Ascending aorta (tissue), 2 donors: ENCODE measurements at regions of chr18 and their contacts with region 1.

Region 1: GRCh38 chr18:7566567-7567473 is at the start of gene PTPRM:
- DNase-seq: peak; percentile 64 to 95
- H3K4me3 ChIP-seq: peak within 1 kb of the TSS; percentile 85 to 96
- H3K27ac ChIP-seq: peak within 1 kb of the TSS; percentile 93 to 100
- H3K4me1 ChIP-seq: peaks cover 0 to 22% of the 10 kb centered on the region in 2 donors
- H3K27me3 ChIP-seq: no peaks in the 10 kb centered on the region
- CTCF ChIP-seq: peak in 1 of 3 experiments; percentile 86
- total RNA-seq, gene PTPRM: 257 TPM

Region 2: GRCh38 chr18:7084080-7085075 is 482.4 kb before region 1 on chr18:
- intact Hi-C with region 1: loop called (anchors 5 kb)
- DNase-seq: no peak
- H3K4me3 ChIP-seq: no peak overlapping the region
- H3K27ac ChIP-seq: peak overlapping the region; percentile 46 to 69
- H3K4me1 ChIP-seq: peaks cover 0 to 12% of the 10 kb centered on the region in 2 donors
- H3K27me3 ChIP-seq: no peaks in the 10 kb centered on the region
- CTCF ChIP-seq: no peak

Region 3: DNA sequence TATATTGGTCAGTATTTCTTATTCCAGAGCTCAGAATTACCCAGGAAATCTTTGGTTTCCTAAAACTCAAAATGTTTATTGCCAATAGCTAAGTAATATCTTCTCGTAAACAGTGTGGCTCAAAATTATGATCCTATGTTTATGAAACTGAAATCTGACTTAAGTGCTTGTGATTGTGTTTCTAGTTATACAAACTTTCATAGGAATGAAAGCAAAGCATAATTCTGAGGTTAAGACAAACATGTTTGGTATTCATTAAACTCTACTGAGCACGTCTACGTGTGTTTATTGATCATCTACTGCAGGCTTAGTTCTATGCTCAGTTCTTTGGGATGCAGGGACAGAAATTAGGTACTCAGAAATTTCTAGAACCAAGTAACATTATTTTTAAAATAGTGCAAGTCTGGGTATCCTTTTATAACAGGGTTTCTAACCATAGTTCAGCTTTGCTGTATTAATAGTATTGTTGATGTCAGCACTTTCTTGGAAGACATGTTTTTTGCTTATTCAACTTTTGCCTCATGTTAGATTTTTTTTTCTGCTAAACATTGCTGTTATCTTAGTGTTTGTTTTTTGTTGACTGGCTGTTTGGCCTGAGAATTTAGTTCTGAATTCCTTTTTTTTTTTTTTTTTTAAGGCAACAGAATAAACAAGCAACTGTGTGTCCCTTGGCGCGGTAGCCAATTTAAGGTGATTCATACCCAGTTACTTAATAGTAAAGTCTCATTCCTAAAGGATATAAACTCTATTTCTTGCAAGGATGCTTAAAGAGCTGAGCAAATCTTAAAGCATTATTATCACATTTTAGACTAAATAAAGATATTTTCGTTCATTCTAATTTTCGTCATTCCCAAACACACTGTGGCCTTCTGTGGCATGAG is 31.6 kb after region 1 on chr18:
- intact Hi-C with region 1: loop called (anchors 2 kb)
- DNase-seq: no peak
- H3K4me3 ChIP-seq: no peak overlapping the region
- H3K27ac ChIP-seq: peak overlapping the region in 1 of 2 donors; percentile 43
- H3K4me1 ChIP-seq: peaks cover 0 to 8% of the 10 kb centered on the region in 2 donors
- H3K27me3 ChIP-seq: no peaks in the 10 kb centered on the region
- CTCF ChIP-seq: no peak

Region 4: DNA sequence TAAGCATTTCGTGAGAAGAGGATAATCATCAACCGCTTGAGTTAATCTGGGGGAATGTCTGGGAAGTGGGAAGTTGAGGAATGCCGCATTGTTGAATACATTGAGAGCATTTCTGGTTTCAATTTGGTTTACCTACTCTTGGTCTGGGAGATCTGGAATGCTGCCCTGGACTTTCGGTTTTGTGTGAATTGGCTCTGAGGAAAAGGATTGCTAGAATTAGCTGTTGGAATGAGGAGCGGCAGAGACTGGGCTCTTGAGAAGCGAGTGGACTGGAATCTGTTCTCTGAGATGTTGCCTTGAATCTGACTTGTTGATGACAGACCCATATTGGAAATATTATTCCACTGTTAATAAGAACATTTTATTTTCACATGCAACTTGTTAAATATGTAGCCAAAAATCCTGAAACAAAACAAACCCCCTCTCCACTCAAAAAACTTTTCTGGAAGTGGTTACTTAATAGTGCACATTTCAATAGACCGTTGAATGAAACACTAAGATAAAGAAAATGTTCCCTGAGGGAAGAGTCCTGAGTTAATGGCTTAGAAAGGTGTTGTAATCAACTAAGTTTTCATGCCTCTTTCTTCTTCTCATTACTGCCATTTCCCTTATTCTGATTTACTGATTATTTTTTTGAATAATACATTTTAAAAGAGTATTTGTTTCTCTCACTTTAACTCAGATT is 51.1 kb after region 1 on chr18:
- intact Hi-C with region 1: loop called (anchors 2 kb)
- DNase-seq: no peak
- H3K4me3 ChIP-seq: peak overlapping the region in 1 of 2 donors; percentile 45
- H3K27ac ChIP-seq: peak overlapping the region; percentile 62 to 63
- H3K4me1 ChIP-seq: peaks cover 0 to 13% of the 10 kb centered on the region in 2 donors
- H3K27me3 ChIP-seq: no peaks in the 10 kb centered on the region
- CTCF ChIP-seq: no peak

Region 5: DNA sequence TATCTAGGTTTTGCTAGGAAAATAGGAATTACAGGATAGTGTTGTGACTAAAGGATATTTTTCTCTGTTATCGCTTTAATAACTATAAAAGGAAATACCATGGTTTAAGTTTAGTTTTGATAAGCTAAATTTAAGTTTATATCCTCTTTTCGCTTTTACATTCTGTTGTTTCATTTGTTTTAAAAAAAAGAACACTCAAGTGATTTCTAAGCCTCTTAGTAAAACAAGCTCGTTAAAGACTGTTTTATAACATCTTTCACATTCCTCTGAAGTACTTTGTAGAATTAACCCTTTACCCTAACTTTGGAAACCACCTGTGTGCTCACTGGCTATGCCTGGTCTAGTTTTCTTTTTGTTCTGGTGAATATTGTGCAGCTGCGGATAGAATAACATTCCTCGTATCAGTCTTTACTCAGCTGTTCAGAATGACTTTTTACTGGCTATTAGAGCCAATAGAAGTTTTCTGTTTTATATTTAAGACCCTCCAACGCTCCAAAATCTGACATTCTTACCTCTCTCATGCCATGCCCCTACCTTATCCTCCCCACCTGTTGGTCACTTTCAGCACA is 183.4 kb after region 1 on chr18:
- intact Hi-C with region 1: loop called (anchors 2 kb)
- DNase-seq: no peak
- H3K4me3 ChIP-seq: no peak overlapping the region
- H3K27ac ChIP-seq: peak overlapping the region; percentile 43 to 57
- H3K4me1 ChIP-seq: peaks cover 6 to 43% of the 10 kb centered on the region in 2 donors
- H3K27me3 ChIP-seq: no peaks in the 10 kb centered on the region
- CTCF ChIP-seq: no peak

Region 6: DNA sequence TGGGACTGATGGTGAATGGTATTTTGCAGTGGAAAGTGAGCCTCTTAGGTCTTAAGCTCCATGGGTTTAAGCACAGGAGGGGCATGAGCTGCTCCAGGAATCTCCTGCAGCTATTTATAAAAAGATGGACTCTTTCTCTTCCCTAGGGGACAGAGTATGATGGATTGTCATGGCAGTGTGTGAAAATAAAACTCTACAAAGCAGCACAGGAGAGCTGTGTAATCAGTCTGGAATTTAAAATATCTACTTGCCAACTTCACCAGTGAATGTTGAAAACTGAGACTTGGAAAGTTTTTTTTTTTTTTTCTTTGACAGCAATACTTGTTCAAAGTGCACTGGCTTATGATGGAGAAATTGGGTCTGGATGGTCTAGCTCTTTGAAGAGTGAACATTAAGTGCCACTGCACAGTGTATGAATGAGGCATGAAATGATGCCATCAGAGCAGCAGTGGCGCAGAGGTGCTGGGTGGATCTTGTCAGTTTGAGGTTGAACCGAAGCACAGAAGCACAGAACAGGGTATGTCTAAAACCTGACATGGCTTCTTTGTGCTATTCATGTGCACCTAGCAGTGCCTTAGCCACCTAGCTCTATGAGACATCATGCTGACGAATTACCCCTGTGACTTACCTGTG is 245.7 kb after region 1 on chr18:
- intact Hi-C with region 1: loop called (anchors 2 kb)
- DNase-seq: no peak
- H3K4me3 ChIP-seq: no peak overlapping the region
- H3K27ac ChIP-seq: no peak overlapping the region
- H3K4me1 ChIP-seq: peaks cover 0 to 14% of the 10 kb centered on the region in 2 donors
- H3K27me3 ChIP-seq: no peaks in the 10 kb centered on the region
- CTCF ChIP-seq: no peak

Region 7: DNA sequence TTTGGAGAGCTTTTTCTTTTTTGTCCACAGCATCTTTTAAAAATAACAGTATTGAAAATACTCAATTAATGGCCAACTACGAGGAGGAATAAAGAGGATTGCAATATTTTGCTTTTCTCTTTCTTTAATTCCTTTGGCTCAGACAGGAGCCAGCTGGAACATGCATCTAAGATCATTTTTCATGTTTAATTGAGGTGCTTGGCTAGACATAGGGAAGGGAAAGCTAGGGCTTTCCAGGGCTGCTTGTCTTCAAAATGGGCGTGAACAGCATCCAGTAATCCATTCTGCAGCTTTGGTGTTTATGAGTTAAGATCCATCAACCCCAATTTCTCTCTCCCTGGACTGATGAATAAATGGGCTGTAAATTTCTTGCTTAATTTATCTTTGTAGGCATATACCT is 323.3 kb after region 1 on chr18:
- intact Hi-C with region 1: no loop called
- DNase-seq: no peak
- H3K4me3 ChIP-seq: no peak overlapping the region
- H3K27ac ChIP-seq: no peak overlapping the region
- H3K4me1 ChIP-seq: peaks cover 0 to 3% of the 10 kb centered on the region in 2 donors
- H3K27me3 ChIP-seq: no peaks in the 10 kb centered on the region
- CTCF ChIP-seq: no peak

Region 8: GRCh38 chr18:8341481-8342230 is 774.8 kb after region 1 on chr18:
- intact Hi-C with region 1: loop called (anchors 10 kb)
- DNase-seq: peak in 1 of 2 donors; percentile 70
- H3K4me3 ChIP-seq: no peak overlapping the region
- H3K27ac ChIP-seq: peak overlapping the region; percentile 58 to 71
- H3K4me1 ChIP-seq: peaks cover 7 to 38% of the 10 kb centered on the region in 2 donors
- H3K27me3 ChIP-seq: no peaks in the 10 kb centered on the region
- CTCF ChIP-seq: no peak